ENCODE measurements at regions of chr16 and their contacts with region 1.

Region 1: DNA sequence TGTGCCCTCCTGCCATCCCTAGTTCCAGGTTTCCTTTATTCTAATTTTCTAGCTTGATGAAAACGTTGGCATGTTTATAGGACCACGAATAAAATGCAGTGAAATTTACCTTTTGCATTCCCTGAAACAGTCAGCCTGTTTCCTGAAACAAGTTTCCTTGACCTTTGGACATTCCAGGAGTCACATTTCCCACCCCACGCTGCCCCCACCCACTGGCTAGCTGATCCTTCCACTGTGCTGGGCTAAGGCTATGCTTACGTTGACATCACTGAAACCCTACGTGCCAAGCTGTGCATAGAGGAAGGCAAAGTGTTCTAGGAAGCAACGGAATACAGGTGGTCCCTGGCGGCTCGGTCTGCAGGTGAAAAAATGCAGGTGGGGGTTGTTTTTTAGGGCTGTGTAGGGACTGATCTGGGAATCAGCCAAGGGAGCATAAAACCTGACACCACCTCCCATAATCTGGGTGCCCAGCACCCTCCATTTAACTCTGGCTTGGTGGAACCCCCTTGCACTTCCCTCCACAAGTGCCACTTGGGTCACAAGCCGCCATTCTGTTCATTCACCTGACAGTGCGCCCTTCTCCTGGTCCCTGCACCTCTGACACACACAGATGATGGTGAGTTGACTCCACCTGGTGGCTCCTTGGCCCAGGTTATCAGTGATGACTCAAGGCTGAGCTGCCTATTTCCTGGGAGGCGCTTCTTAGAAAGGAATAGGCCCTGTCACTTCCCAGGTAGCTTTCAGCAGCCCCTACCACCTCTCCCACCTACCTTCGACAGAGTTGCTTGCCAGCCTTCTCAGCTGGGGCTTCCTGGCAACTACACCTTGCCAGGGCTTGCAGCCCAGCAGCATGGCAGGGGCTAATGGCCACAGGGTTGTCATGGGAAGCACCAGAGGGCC is 83.7 kb downstream of the N4BP1 start:
- DNase-seq: peak; percentile 84
- H3K4me3 Mint-ChIP-seq: no peak overlapping the region
- H3K27ac Mint-ChIP-seq: no peak overlapping the region
- H3K4me1 Mint-ChIP-seq: peaks cover 12% of the 10 kb centered on the region
- H3K27me3 Mint-ChIP-seq: no peaks in the 10 kb centered on the region
- CTCF ChIP-seq: peak; percentile 69

Region 2: GRCh38 chr16:48347191-48347865 is 179.0 kb before region 1 on chr16:
- CTCF ChIA-PET with region 1: interaction called, 169 read pairs
- POLR2A ChIA-PET with region 1: no interaction called
- intact Hi-C with region 1: no loop called
- DNase-seq: no peak
- H3K4me3 Mint-ChIP-seq: no peak overlapping the region
- H3K27ac Mint-ChIP-seq: no peak overlapping the region
- H3K4me1 Mint-ChIP-seq: no peaks in the 10 kb centered on the region
- H3K27me3 Mint-ChIP-seq: no peaks in the 10 kb centered on the region
- CTCF ChIP-seq: no peak

Region 3: GRCh38 chr16:48353565-48354163 is 172.6 kb before region 1 on chr16:
- CTCF ChIA-PET with region 1: interaction called, 169 read pairs
- POLR2A ChIA-PET with region 1: interaction called, 4 read pairs
- intact Hi-C with region 1: loop called (anchors 1 kb)
- DNase-seq: peak; percentile 74
- H3K4me3 Mint-ChIP-seq: no peak overlapping the region
- H3K27ac Mint-ChIP-seq: peak overlapping the region; percentile 46
- H3K4me1 Mint-ChIP-seq: no peaks in the 10 kb centered on the region
- H3K27me3 Mint-ChIP-seq: no peaks in the 10 kb centered on the region
- CTCF ChIP-seq: peak; percentile 71

Region 4: DNA sequence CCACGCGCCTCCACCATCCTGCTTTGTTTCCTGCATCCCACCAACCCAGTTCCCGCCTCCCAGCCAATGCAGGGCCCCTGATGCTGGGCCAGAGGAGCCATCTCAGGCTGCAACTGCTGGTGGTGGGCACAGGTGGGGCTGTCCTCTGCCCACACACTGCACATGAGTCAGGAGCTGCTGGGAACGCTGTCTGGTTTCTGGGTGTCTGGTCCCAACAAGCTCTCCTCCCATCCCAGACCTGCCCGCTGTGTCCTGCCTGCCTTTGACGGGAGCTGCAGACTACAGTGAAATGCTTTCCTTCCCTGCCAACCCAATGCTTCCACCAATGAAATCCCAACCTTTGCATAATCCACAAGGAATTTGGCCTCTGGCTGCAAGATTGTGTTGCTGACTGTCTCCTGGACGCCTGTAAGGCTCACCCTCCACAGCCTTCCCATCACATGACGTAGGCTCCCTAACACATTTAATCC is 15.2 kb before region 1 on chr16:
- CTCF ChIA-PET with region 1: interaction called, 28 read pairs
- POLR2A ChIA-PET with region 1: interaction called, 3 read pairs
- intact Hi-C with region 1: no loop called
- DNase-seq: peak; percentile 83
- H3K4me3 Mint-ChIP-seq: no peak overlapping the region
- H3K27ac Mint-ChIP-seq: peak overlapping the region; percentile 80
- H3K4me1 Mint-ChIP-seq: peaks cover 9% of the 10 kb centered on the region
- H3K27me3 Mint-ChIP-seq: no peaks in the 10 kb centered on the region
- CTCF ChIP-seq: no peak

Region 5: DNA sequence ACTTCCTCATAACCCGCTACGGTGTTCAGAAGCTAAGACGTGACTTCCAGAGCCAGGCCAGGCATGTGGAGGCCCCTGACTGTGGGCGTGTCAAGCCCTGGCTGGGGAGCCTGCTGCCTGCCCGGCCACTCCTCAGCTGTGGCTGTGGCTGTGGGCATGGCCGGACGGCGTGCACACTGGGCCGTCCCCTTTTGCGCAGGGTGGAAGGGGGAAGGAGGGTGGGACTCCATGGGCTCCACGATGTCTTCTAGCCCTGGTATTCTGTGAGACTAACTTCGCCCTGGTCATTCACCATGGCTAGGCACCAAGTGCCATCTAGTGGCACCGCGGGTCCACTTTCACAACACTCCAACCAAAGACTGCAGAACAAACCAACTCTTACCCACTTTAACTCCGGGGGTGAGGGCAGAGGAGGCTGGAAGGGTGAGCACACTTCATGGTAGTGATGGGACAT is 15.7 kb after region 1 on chr16:
- CTCF ChIA-PET with region 1: interaction called, 14 read pairs
- POLR2A ChIA-PET with region 1: no interaction called
- intact Hi-C with region 1: no loop called
- DNase-seq: peak; percentile 47
- H3K4me3 Mint-ChIP-seq: no peak overlapping the region
- H3K27ac Mint-ChIP-seq: peak overlapping the region; percentile 63
- H3K4me1 Mint-ChIP-seq: no peaks in the 10 kb centered on the region
- H3K27me3 Mint-ChIP-seq: no peaks in the 10 kb centered on the region
- CTCF ChIP-seq: peak; percentile 35

Measured in MCF 10A (cell line).